ENCODE measurements at regions of chr5 and their contacts with region 1.

Region 1: GRCh38 chr5:159156426-159157238 is 52.7 kb downstream of the RNF145 start:
- DNase-seq: peak; percentile 80
- ATAC-seq: peak; percentile 53
- H3K4me3 ChIP-seq: no peak overlapping the region
- H3K4me3 Mint-ChIP-seq: peak overlapping the region; percentile 17
- H3K27ac ChIP-seq: peak overlapping the region; percentile 32 to 73
- H3K27ac Mint-ChIP-seq: peak overlapping the region; percentile 81
- H3K4me1 ChIP-seq: peaks cover 23 to 26% of the 10 kb centered on the region in 2 donors
- H3K4me1 Mint-ChIP-seq: peaks cover 28% of the 10 kb centered on the region
- H3K27me3 ChIP-seq: no peaks in the 10 kb centered on the region
- H3K27me3 Mint-ChIP-seq: no peaks in the 10 kb centered on the region
- CTCF ChIP-seq: peak; percentile 95

Region 2: DNA sequence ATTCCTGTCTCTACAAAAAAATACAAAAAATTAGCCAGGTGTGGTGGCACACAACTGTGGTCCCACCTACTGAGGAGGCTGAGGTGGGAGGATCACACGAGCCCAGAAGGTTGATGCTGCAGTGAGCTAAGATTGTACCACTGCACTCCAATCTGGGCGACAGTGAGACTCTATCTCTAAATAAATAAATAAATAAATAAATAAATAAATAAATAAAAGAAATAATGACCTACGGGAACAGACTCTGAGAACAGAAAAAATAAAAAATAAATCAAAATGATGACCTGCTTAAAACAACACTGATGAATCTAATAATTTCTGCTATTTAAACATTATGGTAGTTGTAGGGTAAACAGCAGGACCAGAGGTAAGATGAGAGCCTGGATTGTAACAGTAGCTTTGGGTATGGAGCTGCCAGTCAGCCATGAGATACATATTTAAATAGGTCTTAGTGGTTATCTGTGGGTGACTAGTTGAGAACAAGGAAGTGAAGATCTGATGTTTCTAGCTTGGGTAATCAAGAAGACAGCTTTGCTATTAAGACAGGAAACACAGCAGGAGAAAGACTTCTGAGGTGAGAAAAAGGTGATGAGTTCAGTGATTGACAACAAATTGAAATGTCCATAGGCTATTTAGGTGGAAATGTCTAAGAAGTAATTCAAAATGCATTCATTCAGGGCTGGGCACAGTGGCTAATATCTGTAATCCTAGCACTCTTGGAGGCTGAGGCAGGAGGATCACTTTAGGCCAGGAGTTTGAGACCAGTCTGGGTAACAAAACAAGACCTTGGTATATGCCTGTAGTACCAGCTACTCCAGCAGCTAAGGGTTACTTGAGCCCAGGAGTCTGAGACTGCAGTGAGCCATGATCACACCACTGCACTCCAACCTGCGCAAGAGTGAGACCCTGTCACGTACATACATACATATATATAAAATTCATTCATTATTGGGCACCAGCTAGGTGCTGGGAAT is 41.7 kb after region 1 on chr5:
- CTCF ChIA-PET with region 1: interaction called, 37 read pairs
- POLR2A ChIA-PET with region 1: interaction called, 3 read pairs
- intact Hi-C with region 1: no loop called
- DNase-seq: peak; percentile 80
- ATAC-seq: peak; percentile 97
- H3K4me3 ChIP-seq: no peak overlapping the region
- H3K4me3 Mint-ChIP-seq: peak overlapping the region; percentile 30
- H3K27ac ChIP-seq: peak overlapping the region; percentile 64 to 67
- H3K27ac Mint-ChIP-seq: peak overlapping the region; percentile 76
- H3K4me1 ChIP-seq: peaks cover 26 to 42% of the 10 kb centered on the region in 2 donors
- H3K4me1 Mint-ChIP-seq: peaks cover 49% of the 10 kb centered on the region
- H3K27me3 ChIP-seq: no peaks in the 10 kb centered on the region
- H3K27me3 Mint-ChIP-seq: no peaks in the 10 kb centered on the region
- CTCF ChIP-seq: no peak

Region 3: GRCh38 chr5:159262859-159263567 is 106.4 kb after region 1 on chr5 and contains the start of gene UBLCP1:
- CTCF ChIA-PET with region 1: interaction called, 8 read pairs
- POLR2A ChIA-PET with region 1: no interaction called
- intact Hi-C with region 1: loop called (anchors 1 kb)
- DNase-seq: peak; percentile 94
- ATAC-seq: peak; percentile 82
- H3K4me3 ChIP-seq: peak within 1 kb of the TSS; percentile 84 to 96 (median 95)
- H3K4me3 Mint-ChIP-seq: peak within 1 kb of the TSS; percentile 96
- H3K27ac ChIP-seq: peak within 1 kb of the TSS; percentile 87 to 88
- H3K27ac Mint-ChIP-seq: peak within 1 kb of the TSS; percentile 97
- H3K4me1 ChIP-seq: peaks cover 17 to 18% of the 10 kb centered on the region in 2 donors
- H3K4me1 Mint-ChIP-seq: peaks cover 32% of the 10 kb centered on the region
- H3K27me3 ChIP-seq: no peaks in the 10 kb centered on the region
- H3K27me3 Mint-ChIP-seq: no peaks in the 10 kb centered on the region
- CTCF ChIP-seq: no peak
- total RNA-seq, gene UBLCP1: 25.1 and 25.5 TPM in 2 replicates

Region 4: GRCh38 chr5:159310511-159310910 is 153.9 kb after region 1 on chr5:
- CTCF ChIA-PET with region 1: interaction called, 47 read pairs
- POLR2A ChIA-PET with region 1: no interaction called
- intact Hi-C with region 1: no loop called
- DNase-seq: peak; percentile 70
- ATAC-seq: peak; percentile 91
- H3K4me3 ChIP-seq: peak overlapping the region; percentile 16 to 61 (median 36)
- H3K4me3 Mint-ChIP-seq: peak overlapping the region; percentile 76
- H3K27ac ChIP-seq: no peak overlapping the region
- H3K27ac Mint-ChIP-seq: peak overlapping the region; percentile 2
- H3K4me1 ChIP-seq: peaks cover 13 to 19% of the 10 kb centered on the region in 2 donors
- H3K4me1 Mint-ChIP-seq: peaks cover 18% of the 10 kb centered on the region
- H3K27me3 ChIP-seq: peaks cover 0 to 6% (median 2%) of the 10 kb centered on the region in 4 experiments
- H3K27me3 Mint-ChIP-seq: peaks cover 10% of the 10 kb centered on the region
- CTCF ChIP-seq: no peak

Region 5: GRCh38 chr5:159412284-159413046 is 255.8 kb after region 1 on chr5:
- CTCF ChIA-PET with region 1: interaction called, 4 read pairs
- POLR2A ChIA-PET with region 1: no interaction called
- intact Hi-C with region 1: loop called (anchors 10 kb)
- DNase-seq: peak; percentile 56
- ATAC-seq: peak; percentile 71
- H3K4me3 ChIP-seq: no peak overlapping the region
- H3K4me3 Mint-ChIP-seq: no peak overlapping the region
- H3K27ac ChIP-seq: peak overlapping the region; percentile 51 to 54
- H3K27ac Mint-ChIP-seq: peak overlapping the region; percentile 79
- H3K4me1 ChIP-seq: peaks cover 11 to 28% of the 10 kb centered on the region in 2 donors
- H3K4me1 Mint-ChIP-seq: peaks cover 27% of the 10 kb centered on the region
- H3K27me3 ChIP-seq: no peaks in the 10 kb centered on the region
- H3K27me3 Mint-ChIP-seq: no peaks in the 10 kb centered on the region
- CTCF ChIP-seq: no peak

Region 6: GRCh38 chr5:159451197-159452052 is 294.8 kb after region 1 on chr5:
- CTCF ChIA-PET with region 1: no interaction called
- POLR2A ChIA-PET with region 1: no interaction called
- intact Hi-C with region 1: no loop called
- DNase-seq: no peak
- ATAC-seq: no peak
- H3K4me3 ChIP-seq: no peak overlapping the region
- H3K4me3 Mint-ChIP-seq: no peak overlapping the region
- H3K27ac ChIP-seq: no peak overlapping the region
- H3K27ac Mint-ChIP-seq: no peak overlapping the region
- H3K4me1 ChIP-seq: peaks cover 9 to 12% of the 10 kb centered on the region in 2 donors
- H3K4me1 Mint-ChIP-seq: peaks cover 17% of the 10 kb centered on the region
- H3K27me3 ChIP-seq: no peaks in the 10 kb centered on the region
- H3K27me3 Mint-ChIP-seq: no peaks in the 10 kb centered on the region
- CTCF ChIP-seq: no peak

Region 7: DNA sequence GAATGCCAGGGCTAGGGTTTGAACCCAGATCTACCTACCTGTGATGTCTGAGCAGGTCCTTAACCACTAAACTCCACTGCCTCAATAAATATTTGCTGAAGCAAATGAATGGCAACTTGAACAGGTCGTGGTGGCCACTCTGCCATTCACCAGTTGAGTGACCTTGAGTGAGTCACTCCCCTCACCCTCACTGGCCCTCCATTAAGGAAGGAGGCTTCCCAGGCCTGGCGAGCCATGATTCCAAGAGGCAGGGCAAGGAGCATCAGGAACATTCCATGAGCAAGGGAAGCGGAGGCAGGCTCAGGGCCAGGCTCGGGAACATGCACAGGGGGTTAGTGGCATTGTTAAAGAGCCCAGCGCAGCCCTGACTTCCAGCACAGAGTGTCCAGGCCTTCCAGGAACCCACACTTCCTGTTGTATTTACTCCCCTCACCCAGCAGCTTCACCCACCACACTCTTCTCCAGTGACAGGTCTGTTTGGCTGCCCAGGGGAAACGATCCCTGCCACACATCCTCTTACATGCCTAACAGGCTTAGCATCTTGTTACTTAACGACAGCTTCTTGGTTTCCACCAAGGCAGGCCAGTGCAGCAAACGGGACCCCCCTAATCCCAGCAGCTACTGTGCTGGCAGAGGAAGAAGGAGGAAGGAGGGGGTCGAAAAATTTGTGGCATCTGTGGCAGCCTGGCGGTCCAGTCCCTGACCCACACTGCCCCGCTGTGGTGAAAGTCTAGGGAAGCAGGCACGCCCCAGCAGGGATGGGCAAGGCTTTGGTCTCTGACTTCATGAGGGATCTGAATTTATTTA is 808.6 kb after region 1 on chr5:
- CTCF ChIA-PET with region 1: interaction called, 11 read pairs
- POLR2A ChIA-PET with region 1: no interaction called
- intact Hi-C with region 1: no loop called
- DNase-seq: peak; percentile 32
- ATAC-seq: peak; percentile 49
- H3K4me3 ChIP-seq: no peak overlapping the region
- H3K4me3 Mint-ChIP-seq: no peak overlapping the region
- H3K27ac ChIP-seq: no peak overlapping the region
- H3K27ac Mint-ChIP-seq: no peak overlapping the region
- H3K4me1 ChIP-seq: peaks cover 0 to 3% of the 10 kb centered on the region in 2 donors
- H3K4me1 Mint-ChIP-seq: no peaks in the 10 kb centered on the region
- H3K27me3 ChIP-seq: peaks cover 0 to 22% (median 14%) of the 10 kb centered on the region in 4 experiments
- H3K27me3 Mint-ChIP-seq: peaks cover 42% of the 10 kb centered on the region
- CTCF ChIP-seq: peak; percentile 50